K562 (cell line): ENCODE measurements at regions of chr16 and their contacts with region 1.

Region 1: DNA sequence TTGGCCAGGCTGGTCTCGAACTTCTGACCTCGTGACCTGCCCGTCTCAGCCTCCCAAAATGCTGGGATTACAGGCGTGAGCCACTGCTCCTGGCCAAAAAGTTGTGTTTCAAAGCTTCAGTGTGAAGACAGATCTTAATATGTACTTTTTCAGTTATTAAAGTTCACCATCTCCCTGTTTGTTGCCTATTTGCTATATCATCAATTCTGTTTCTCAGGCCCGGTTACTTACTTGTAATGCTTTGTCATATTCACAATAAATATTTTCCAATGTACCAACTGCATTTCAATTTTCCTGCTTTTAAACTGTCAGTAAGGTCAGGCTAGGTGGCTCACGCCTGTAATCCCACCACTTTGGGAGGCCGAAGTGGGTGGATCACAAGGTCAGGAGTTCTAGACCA is 22.5 kb downstream of the FANCA start:
- DNase-seq: no peak
- ATAC-seq: no peak
- H3K4me3 ChIP-seq: no peak overlapping the region
- H3K27ac ChIP-seq: no peak overlapping the region
- H3K4me1 ChIP-seq: no peaks in the 10 kb centered on the region
- H3K27me3 ChIP-seq: no peaks in the 10 kb centered on the region
- CTCF ChIP-seq: no peak
- EP300 ChIP-seq: no peak
- POLR2A ChIP-seq: no peak
- RAD21 ChIP-seq: no peak

Region 2: GRCh38 chr16:89706507-89707263 is 87.3 kb before region 1 on chr16:
- CTCF ChIA-PET with region 1: interaction called, 9 read pairs
- POLR2A ChIA-PET with region 1: no interaction called
- in situ Hi-C with region 1: no loop called
- intact Hi-C with region 1: loop called (anchors 1 kb)
- DNase-seq: no peak
- ATAC-seq: no peak
- H3K4me3 ChIP-seq: no peak overlapping the region
- H3K27ac ChIP-seq: no peak overlapping the region
- H3K4me1 ChIP-seq: peaks cover 23 to 74% of the 10 kb centered on the region in 2 experiments; a peak in 4 of 5 replicates
- H3K27me3 ChIP-seq: no peaks in the 10 kb centered on the region
- CTCF ChIP-seq: no peak
- EP300 ChIP-seq: no peak
- POLR2A ChIP-seq: no peak
- RAD21 ChIP-seq: no peak

Region 3: GRCh38 chr16:89811326-89811725 is 17.4 kb after region 1 on chr16:
- CTCF ChIA-PET with region 1: no interaction called
- POLR2A ChIA-PET with region 1: no interaction called
- in situ Hi-C with region 1: no loop called
- intact Hi-C with region 1: no loop called
- DNase-seq: no peak
- ATAC-seq: no peak
- H3K4me3 ChIP-seq: no peak overlapping the region
- H3K27ac ChIP-seq: no peak overlapping the region
- H3K4me1 ChIP-seq: peaks cover 11 to 28% of the 10 kb centered on the region in 2 experiments; a peak in 4 of 5 replicates
- H3K27me3 ChIP-seq: no peaks in the 10 kb centered on the region
- CTCF ChIP-seq: no peak
- EP300 ChIP-seq: no peak
- POLR2A ChIP-seq: no peak
- RAD21 ChIP-seq: no peak